Activated CD4-positive, alpha-beta memory T cell treated with anti-CD3 and anti-CD28 coated beads for 36 hours (primary cell): ENCODE measurements at regions of chr20 and their contacts with region 1.

Region 1: DNA sequence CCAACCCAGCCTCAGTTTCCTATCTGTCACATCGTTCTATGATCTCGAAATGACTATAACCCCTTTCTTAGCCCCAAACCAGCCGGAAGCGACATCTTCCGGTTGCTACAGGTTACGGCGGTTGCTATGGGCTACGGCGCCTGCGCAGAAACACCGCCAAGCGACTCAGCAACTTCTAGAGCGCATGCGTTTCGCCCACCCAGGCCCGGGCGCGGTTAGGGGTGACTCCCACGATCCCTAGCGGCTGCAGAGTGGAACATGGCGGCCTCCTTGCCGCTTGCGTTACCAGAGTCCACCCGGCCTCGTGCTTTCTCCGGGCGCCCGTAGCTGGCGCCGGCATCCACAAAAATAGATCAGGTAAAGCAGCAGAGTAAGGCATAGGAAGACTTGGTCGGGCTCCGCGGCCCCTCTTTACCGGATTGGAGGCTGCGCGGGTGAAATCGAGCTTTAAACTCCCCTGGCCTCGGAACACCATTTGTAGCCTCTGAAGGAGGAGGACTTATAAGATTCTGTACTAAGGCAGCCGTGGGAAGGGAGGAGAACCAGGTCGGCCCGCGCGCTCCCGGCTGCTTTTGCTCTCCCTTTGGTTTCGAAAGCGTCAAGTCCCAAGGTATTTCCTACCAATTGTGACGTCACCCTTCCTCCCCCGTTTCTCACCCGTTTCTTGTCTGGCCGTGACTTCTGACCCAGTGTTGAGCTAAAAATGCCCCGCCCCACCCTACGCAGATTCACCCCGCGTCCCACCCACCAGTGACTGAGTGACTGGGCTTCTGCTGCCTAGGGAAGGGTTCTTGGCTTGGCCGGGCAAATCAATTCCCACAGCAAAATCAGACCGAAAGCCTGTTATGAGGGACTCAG is 3.5 kb downstream of the SDCBP2 start:
- DNase-seq: peak; percentile 99
- H3K4me3 Mint-ChIP-seq: no peak overlapping the region
- H3K27ac Mint-ChIP-seq: no peak overlapping the region
- H3K4me1 Mint-ChIP-seq: peaks cover 23% of the 10 kb centered on the region
- H3K27me3 Mint-ChIP-seq: no peaks in the 10 kb centered on the region

Region 2: GRCh38 chr20:1242530-1242929 is 82.9 kb before region 1 on chr20:
- CTCF ChIA-PET with region 1: no interaction called
- POLR2A ChIA-PET with region 1: no interaction called
- intact Hi-C with region 1: no loop called
- DNase-seq: no peak
- H3K4me3 Mint-ChIP-seq: no peak overlapping the region
- H3K27ac Mint-ChIP-seq: no peak overlapping the region
- H3K4me1 Mint-ChIP-seq: no peaks in the 10 kb centered on the region
- H3K27me3 Mint-ChIP-seq: peaks cover 9% of the 10 kb centered on the region

Region 3: DNA sequence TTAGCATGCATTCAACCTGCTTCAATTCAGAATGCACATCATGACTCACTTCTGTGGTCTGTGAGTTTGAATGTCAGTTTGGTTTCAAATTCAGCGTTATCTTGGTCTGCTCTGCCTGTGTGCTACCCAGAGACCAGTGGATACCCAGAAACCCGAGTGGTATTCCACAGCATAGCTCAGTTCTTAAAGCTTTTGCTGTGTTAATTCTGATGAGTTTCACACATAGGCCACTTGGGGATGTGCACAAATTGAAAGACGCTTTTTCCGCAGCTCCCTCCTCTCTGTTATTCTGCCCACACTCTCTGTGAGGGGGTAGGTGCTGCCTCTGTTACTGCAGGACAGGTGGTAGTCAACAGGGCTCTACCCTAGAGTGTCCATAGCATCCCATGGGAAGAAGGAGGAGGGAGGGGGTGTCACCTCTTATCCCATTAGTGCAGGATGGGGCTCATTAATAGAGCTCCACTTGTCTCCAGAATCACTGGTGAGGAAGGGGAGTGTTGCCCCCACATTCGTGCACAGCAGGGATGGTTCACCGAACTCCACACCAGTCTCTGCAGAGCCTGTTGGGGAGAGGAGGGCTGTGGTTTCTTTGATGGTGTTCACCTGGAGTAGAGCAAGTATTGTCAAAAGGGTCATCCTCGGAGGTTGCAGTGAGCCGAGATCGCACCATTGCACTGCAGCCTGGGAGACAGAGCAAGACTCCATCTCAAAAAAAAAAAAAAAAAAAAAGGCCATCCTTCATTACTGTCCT is 32.7 kb after region 1 on chr20:
- CTCF ChIA-PET with region 1: interaction called, 4 read pairs
- POLR2A ChIA-PET with region 1: interaction called, 12 read pairs
- intact Hi-C with region 1: loop called (anchors 1 kb)
- DNase-seq: peak; percentile 64
- H3K4me3 Mint-ChIP-seq: peak overlapping the region; percentile 23
- H3K27ac Mint-ChIP-seq: peak overlapping the region; percentile 72
- H3K4me1 Mint-ChIP-seq: peaks cover 58% of the 10 kb centered on the region
- H3K27me3 Mint-ChIP-seq: no peaks in the 10 kb centered on the region

Region 4: GRCh38 chr20:1437235-1437904 is 112.0 kb after region 1 on chr20:
- CTCF ChIA-PET with region 1: interaction called, 6 read pairs
- POLR2A ChIA-PET with region 1: interaction called, 3 read pairs
- intact Hi-C with region 1: loop called (anchors 1 kb)
- DNase-seq: peak; percentile 87
- H3K4me3 Mint-ChIP-seq: peak overlapping the region; percentile 20
- H3K27ac Mint-ChIP-seq: no peak overlapping the region
- H3K4me1 Mint-ChIP-seq: peaks cover 27% of the 10 kb centered on the region
- H3K27me3 Mint-ChIP-seq: no peaks in the 10 kb centered on the region

Region 5: GRCh38 chr20:1631309-1632151 is 306.1 kb after region 1 on chr20:
- CTCF ChIA-PET with region 1: no interaction called
- POLR2A ChIA-PET with region 1: no interaction called
- intact Hi-C with region 1: loop called (anchors 5 kb)
- DNase-seq: no peak
- H3K4me3 Mint-ChIP-seq: peak overlapping the region; percentile 0
- H3K27ac Mint-ChIP-seq: peak overlapping the region; percentile 55
- H3K4me1 Mint-ChIP-seq: peaks cover 63% of the 10 kb centered on the region
- H3K27me3 Mint-ChIP-seq: no peaks in the 10 kb centered on the region